ENCODE measurements at regions of chr17 and their contacts with region 1.

Region 1: DNA sequence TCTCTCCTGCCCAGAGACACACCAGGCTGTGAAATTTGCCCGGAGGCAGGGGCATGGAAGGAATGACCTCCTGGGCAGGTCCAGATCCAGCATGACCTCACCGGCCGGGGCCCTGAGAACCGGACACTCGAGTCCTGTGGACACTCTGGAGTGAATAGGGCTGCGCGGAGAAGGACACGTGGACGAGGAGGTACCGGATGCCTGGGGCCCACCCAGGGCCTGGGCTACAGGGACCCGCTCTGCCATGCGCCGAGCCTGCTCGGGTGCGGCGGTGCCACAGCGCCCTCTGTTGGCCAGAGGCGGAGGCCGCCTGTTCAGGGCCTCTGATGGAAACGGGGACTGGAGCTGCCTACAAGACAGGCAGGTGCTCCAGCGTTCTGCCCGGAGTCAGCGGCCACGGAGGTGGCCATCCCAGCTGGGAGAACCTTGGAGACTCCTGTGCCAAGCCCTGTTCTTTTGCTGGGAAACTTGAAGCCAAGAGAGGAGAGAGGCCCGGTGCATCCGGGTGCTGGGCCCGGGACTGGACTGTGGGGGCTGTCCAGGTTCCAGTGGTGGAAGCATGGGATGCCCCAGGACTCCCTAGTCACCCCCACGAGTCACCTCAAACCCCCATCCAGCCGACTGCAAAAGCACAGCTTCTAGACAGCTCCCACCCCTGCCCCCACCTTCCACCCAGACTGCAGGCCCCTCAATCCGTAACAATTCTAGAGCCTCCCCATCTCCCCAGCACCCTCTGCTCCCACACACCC is 19.3 kb upstream of the NXPH3 start:
- DNase-seq: peak; percentile 59
- H3K4me3 ChIP-seq: no peak overlapping the region
- H3K27ac ChIP-seq: peak overlapping the region; percentile 36 to 42
- H3K4me1 ChIP-seq: no peaks in the 10 kb centered on the region
- H3K27me3 ChIP-seq: no peaks in the 10 kb centered on the region
- CTCF ChIP-seq: peak; percentile 84 to 97 (median 96)
- POLR2A ChIP-seq: no peak

Region 2: DNA sequence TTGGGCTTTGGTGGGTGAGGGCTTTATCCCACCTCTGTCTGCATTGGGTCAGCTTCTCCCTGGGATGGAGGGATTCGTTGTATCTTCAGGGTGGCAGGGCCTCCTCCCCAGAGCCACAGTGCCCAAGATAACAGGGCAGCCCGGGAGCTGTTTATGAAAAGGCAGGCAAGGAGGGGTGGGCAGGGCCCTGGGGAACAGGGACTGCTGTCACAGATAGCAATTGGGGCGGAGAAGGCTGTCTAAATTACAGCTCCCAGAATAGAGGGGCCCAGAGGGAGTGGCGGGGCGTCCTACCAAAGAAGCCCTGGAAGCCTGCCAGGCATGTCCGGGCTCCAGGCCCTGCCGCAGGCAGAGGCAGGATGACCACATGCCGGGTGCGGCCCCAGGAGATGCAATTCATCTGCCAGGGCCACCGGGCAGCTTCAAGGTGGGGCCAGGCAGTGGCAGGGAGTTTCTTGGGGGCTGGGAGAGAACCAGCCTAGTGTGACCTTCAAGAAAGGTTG is 307.1 kb before region 1 on chr17:
- intact Hi-C with region 1: no loop called
- DNase-seq: no peak
- H3K4me3 ChIP-seq: no peak overlapping the region
- H3K27ac ChIP-seq: no peak overlapping the region
- H3K4me1 ChIP-seq: no peaks in the 10 kb centered on the region
- H3K27me3 ChIP-seq: no peaks in the 10 kb centered on the region
- CTCF ChIP-seq: no peak
- POLR2A ChIP-seq: no peak

Region 3: DNA sequence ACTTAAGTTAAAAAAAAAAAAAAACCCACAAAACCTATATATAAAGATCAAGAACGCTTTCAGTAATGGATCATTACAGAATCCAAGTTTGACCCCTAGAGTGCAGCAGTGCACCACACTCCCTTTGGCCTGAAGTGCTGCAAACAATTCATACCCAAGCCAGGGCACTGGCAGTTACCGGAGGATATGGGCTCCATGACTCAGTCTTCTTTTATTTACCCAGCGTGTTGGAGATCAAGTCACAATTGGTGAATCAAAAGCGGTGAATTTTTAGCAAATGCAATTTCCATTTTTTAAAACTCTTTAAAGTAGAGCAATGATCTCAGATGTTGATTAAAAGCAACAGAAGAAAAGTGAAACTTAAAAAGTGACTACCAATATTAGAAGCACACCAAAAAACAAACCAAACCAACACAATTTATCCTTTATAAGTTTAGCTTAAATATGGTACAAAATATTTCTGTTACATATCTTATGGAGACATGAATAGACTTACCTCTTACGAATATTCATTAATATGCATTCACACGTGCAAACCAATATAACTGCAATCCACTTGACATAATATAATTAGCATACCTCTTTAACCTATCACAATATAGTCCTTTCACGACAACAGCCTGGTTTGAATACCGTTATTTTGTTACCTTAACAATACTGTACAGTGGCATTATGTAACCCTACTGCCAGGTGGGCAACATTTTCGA is 240.7 kb before region 1 on chr17:
- intact Hi-C with region 1: loop called (anchors 10 kb)
- DNase-seq: peak; percentile 84
- H3K4me3 ChIP-seq: no peak overlapping the region
- H3K27ac ChIP-seq: peak overlapping the region in 1 of 2 donors; percentile 20
- H3K4me1 ChIP-seq: peaks cover 2% of the 10 kb centered on the region
- H3K27me3 ChIP-seq: no peaks in the 10 kb centered on the region
- CTCF ChIP-seq: peak; percentile 76 to 90 (median 80)
- POLR2A ChIP-seq: no peak

Region 4: DNA sequence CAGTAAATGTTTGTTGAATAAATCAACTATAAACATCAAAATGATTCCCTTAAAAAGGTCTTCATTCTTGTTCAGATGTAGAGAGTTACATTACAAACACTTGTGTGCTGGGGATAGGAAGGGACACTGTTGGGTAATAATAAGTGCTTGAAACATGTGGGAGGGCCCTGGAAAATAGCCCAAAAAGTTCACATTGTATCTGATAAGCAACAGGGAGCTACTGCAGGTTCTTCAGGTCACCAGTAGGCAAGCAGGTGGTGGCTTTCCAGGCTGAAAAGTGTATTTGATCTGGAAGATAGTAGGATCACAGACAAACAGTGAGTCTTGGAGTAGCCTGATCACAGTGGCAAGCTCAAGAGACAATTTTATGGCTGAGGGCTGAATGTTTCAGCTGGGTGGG is 175.3 kb before region 1 on chr17:
- intact Hi-C with region 1: no loop called
- DNase-seq: no peak
- H3K4me3 ChIP-seq: no peak overlapping the region
- H3K27ac ChIP-seq: no peak overlapping the region
- H3K4me1 ChIP-seq: no peaks in the 10 kb centered on the region
- H3K27me3 ChIP-seq: no peaks in the 10 kb centered on the region
- CTCF ChIP-seq: no peak
- POLR2A ChIP-seq: no peak

Region 5: GRCh38 chr17:49407981-49408501 is 148.4 kb before region 1 on chr17:
- intact Hi-C with region 1: loop called (anchors 10 kb)
- DNase-seq: peak; percentile 55
- H3K4me3 ChIP-seq: no peak overlapping the region
- H3K27ac ChIP-seq: no peak overlapping the region
- H3K4me1 ChIP-seq: peaks cover 7% of the 10 kb centered on the region
- H3K27me3 ChIP-seq: no peaks in the 10 kb centered on the region
- CTCF ChIP-seq: peak; percentile 16 to 70 (median 58)
- POLR2A ChIP-seq: no peak

Region 6: DNA sequence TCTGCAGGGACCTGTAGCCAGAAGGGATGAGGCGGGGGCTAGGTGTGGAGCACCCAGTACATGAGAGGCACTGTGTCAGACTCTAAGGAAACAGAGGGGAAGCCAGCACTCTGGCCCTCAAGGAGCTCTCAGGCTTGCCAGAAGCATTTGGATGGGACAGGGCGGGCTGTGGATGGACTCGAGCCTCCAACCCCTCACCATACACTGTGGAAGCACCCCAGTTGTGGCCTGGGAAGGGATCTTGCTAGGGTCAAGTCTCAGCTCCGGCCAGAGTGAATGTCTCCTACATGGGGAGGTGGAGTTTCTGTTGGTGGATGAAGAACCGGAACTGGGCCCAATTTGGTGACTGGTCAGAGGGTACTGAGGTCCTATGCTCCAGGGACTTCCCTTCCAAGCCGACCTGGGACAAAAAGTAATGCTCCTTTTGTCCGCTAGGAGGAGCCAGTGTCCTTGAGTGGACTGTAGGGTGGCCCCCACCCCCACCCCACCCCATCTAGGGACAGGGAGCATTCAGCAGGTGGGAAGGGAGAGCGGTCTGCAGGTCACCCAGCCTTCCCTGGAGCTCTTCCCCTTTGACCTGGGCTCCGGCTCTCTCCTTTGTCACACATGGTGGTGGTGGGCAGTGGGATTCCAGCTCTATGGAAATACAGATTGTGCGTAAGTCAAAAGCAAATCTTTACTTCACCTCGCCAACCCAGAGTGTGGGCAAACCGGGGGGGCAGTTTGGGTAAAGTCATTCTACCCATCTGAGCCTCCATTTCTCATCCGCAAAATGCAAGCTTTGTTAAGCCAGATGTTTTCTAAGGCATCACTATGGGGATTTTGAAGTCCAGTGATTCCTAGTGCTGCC is 121.4 kb before region 1 on chr17:
- intact Hi-C with region 1: loop called (anchors 5 kb)
- DNase-seq: peak; percentile 42
- H3K4me3 ChIP-seq: no peak overlapping the region
- H3K27ac ChIP-seq: no peak overlapping the region
- H3K4me1 ChIP-seq: no peaks in the 10 kb centered on the region
- H3K27me3 ChIP-seq: no peaks in the 10 kb centered on the region
- CTCF ChIP-seq: peak; percentile 14 to 75 (median 60)
- POLR2A ChIP-seq: no peak

Region 7: GRCh38 chr17:49497148-49498028 is 59.0 kb before region 1 on chr17:
- intact Hi-C with region 1: loop called (anchors 1 kb)
- DNase-seq: peak; percentile 60
- H3K4me3 ChIP-seq: peak overlapping the region; percentile 43 to 50
- H3K27ac ChIP-seq: peak overlapping the region; percentile 56 to 69
- H3K4me1 ChIP-seq: peaks cover 7% of the 10 kb centered on the region
- H3K27me3 ChIP-seq: no peaks in the 10 kb centered on the region
- CTCF ChIP-seq: no peak
- POLR2A ChIP-seq: peak; percentile 59